MCF 10A (cell line): ENCODE measurements at regions of chr16 and their contacts with region 1.

Region 1: DNA sequence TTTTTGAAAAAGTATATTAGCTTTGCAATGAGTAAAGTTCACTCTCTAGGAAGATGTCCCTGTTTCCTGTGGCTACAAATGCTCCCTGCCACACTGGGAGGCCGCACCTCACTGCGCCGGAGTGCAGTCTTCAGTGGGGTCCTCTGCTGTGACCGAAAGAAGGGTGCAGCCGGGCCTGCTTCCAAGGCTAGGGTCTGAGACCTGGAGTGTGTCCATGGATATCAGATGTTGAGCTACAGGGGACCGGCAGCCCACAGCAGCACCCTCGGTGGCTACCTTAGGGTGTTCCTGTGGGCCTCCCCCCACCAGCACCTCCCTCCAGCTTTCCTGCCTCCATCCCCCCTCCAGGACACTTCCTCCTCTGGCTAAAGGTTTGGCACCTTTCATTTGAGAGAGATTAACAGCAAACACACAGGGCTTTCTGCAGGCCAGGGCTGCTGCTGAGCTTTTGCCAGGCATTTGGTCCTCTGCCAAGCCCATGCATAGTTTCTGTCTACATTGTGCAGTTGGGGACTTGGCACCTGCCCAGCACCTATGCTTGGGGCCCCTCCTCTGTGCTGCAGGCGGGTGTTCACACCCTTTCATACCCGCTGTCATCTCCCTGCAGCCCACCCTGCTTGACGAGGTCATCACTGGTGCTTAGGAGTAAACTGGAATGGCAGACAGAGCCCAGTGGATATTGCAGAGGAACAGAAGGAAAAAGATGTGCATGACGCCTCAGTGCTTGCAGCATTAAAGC is 33.8 kb upstream of the CRISPLD2 start:
- DNase-seq: peak; percentile 93
- H3K4me3 Mint-ChIP-seq: no peak overlapping the region
- H3K27ac Mint-ChIP-seq: peak overlapping the region; percentile 43
- H3K4me1 Mint-ChIP-seq: peaks cover 20% of the 10 kb centered on the region
- H3K27me3 Mint-ChIP-seq: no peaks in the 10 kb centered on the region
- CTCF ChIP-seq: no peak

Region 2: GRCh38 chr16:84449171-84450140 is 336.6 kb before region 1 on chr16:
- CTCF ChIA-PET with region 1: no interaction called
- POLR2A ChIA-PET with region 1: no interaction called
- intact Hi-C with region 1: no loop called
- DNase-seq: no peak
- H3K4me3 Mint-ChIP-seq: no peak overlapping the region
- H3K27ac Mint-ChIP-seq: peak overlapping the region; percentile 63
- H3K4me1 Mint-ChIP-seq: no peaks in the 10 kb centered on the region
- H3K27me3 Mint-ChIP-seq: no peaks in the 10 kb centered on the region
- CTCF ChIP-seq: no peak

Region 3: DNA sequence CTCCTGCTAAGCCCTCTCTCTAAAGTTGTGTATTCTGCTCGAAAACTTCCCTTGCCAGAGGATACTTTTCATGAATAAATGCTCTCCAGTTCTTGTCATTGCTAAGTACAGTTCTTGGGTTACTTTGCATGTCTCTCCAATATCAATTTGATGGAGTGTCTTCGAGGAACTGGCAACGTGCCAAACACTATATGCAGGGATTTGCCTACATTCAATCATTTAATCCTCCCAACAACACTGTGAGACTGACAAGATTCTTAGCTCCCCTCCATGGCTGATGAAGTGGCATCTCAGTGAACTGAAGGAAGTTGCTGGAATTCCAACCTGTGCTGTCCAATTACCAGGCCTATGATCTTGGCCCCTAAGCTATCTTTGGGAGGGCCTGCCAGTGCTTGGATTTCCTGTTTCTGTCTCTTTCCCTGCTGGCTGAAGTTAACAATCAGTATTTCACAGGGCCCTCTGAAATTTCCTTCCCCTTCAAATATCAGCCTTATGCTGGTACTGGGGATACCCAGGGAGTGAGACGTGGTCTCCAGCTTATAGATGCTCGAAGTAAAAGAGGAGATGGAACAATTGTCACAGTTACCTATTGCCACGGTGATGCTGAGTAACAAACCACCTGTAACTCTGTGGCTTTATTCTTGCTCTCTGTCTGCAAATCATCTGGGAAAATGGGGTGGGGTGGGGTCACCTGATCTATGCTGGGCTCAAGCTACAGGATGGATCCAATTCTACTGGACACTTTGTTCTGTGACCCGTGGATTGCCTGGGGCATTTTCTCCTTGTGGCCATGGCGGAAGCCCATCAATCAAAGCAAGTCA is 14.4 kb after region 1 on chr16:
- CTCF ChIA-PET with region 1: interaction called, 8 read pairs
- POLR2A ChIA-PET with region 1: interaction called, 10 read pairs
- intact Hi-C with region 1: no loop called
- DNase-seq: no peak
- H3K4me3 Mint-ChIP-seq: no peak overlapping the region
- H3K27ac Mint-ChIP-seq: no peak overlapping the region
- H3K4me1 Mint-ChIP-seq: no peaks in the 10 kb centered on the region
- H3K27me3 Mint-ChIP-seq: no peaks in the 10 kb centered on the region
- CTCF ChIP-seq: no peak

Region 4: DNA sequence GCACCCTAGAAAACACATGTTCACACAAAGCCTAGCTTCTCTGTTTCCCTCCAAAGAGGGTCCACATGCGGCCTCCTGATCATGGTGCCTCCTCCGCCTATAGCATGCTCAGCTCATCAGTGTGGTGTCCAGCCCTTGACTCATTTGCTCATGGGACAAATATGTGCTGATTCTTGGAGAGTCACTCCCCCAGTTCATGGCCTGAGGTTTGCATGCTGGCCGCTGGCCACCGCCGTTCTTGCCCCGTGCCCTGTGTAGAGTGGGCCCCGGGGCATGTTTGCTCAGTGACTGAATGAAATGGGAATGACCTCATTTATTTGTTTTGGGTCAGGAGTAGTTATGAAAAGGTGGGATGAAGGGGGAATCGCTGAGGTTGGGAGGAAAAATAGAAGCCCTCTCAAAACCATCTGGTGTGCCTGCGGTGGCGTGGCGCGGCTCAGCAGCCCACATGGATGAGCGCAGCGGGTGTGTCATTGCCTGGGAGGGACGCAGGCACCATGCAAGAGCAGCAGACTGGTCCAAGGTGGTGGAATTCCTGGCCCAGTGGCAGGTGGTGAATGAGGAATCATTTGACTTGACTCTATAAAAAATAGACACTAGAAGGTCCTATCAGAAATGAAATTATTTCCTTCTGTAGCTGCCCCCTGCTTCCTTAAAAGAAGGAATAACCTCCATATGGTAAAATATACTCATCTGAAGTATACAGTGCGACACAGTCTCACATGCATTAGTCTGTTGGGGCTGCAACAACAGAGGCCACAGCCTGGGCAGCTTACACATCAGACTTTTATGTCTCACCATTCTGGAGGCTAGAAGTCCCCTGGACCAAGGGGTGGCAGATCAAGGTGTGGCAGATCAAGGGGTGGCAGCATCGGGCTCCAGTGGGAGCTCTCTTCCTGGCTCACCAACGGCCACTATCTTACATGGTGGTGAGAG is 65.4 kb after region 1 on chr16:
- CTCF ChIA-PET with region 1: no interaction called
- POLR2A ChIA-PET with region 1: interaction called, 3 read pairs
- intact Hi-C with region 1: loop called (anchors 5 kb)
- DNase-seq: peak; percentile 93
- H3K4me3 Mint-ChIP-seq: no peak overlapping the region
- H3K27ac Mint-ChIP-seq: no peak overlapping the region
- H3K4me1 Mint-ChIP-seq: peaks cover 18% of the 10 kb centered on the region
- H3K27me3 Mint-ChIP-seq: no peaks in the 10 kb centered on the region
- CTCF ChIP-seq: no peak